T-cell (primary cell): ENCODE measurements at regions of chr5 and their contacts with region 1.

Region 1: DNA sequence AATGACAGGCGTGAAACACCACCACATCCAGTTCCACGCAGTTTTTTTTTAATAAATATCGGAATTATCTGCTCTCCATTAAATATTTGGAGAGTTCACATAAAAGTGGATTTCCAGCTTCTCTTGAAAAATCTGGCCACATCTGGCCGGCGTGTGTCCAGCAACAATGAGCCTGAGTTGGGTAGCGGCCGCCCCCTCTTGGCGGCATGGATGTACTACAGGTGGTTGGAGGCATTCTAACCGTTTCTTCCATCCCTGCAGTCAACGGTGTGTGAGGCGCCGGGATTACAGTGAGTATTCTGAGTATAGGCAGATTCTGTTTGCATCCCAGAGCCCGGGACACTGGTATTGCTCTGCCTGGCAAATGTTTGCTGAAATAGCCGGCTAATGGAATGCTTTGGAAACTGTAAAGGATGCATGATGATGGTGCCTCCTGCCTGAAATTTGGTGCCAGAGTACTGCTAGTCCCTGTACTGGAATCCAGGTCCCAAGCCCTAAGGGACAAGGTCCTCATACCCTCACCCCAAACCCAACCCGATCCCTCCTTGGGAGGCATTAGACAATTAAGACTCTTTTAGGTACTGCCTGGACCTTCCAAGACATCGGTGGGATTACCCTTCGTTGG is 13.6 kb upstream of the GM2A start:
- DNase-seq: peak in 26 of 35 experiments; percentile 13 to 66 (median 42)
- ATAC-seq: peak; percentile 53 to 79 (median 65)
- H3K4me3 ChIP-seq: no peak overlapping the region
- H3K4me3 Mint-ChIP-seq: peak overlapping the region in 1 of 3 donors; percentile 4
- H3K27ac ChIP-seq: no peak overlapping the region
- H3K27ac Mint-ChIP-seq: peak overlapping the region in 1 of 2 donors; percentile 16
- H3K4me1 ChIP-seq: peaks cover 11 to 30% of the 10 kb centered on the region in 2 experiments
- H3K4me1 Mint-ChIP-seq: peaks cover 23 to 35% (median 32%) of the 10 kb centered on the region in 3 donors
- H3K27me3 ChIP-seq: peaks cover 0 to 3% of the 10 kb centered on the region in 2 experiments
- H3K27me3 Mint-ChIP-seq: no peaks in the 10 kb centered on the region

Region 2: GRCh38 chr5:151223469-151224264 is 15.7 kb before region 1 on chr5 and contains the start of gene CCDC69:
- CTCF ChIA-PET with region 1: interaction called, 4 to 10 read pairs
- POLR2A ChIA-PET with region 1: interaction called, 5 read pairs
- DNase-seq: peak in 28 of 35 experiments; percentile 19 to 65 (median 38)
- ATAC-seq: peak; percentile 56 to 65 (median 62)
- H3K4me3 ChIP-seq: peak within 1 kb of the TSS; percentile 87 to 95
- H3K4me3 Mint-ChIP-seq: peak within 1 kb of the TSS; percentile 87 to 94 (median 88)
- H3K27ac ChIP-seq: peak within 1 kb of the TSS; percentile 94
- H3K27ac Mint-ChIP-seq: peak within 1 kb of the TSS; percentile 97 to 99
- H3K4me1 ChIP-seq: peaks cover 41 to 61% of the 10 kb centered on the region in 2 experiments
- H3K4me1 Mint-ChIP-seq: peaks cover 58 to 66% (median 59%) of the 10 kb centered on the region in 3 donors
- H3K27me3 ChIP-seq: no peaks in the 10 kb centered on the region
- H3K27me3 Mint-ChIP-seq: no peaks in the 10 kb centered on the region
- total RNA-seq, gene CCDC69: 86.3 to 112 (median 93.5) TPM

Region 3: DNA sequence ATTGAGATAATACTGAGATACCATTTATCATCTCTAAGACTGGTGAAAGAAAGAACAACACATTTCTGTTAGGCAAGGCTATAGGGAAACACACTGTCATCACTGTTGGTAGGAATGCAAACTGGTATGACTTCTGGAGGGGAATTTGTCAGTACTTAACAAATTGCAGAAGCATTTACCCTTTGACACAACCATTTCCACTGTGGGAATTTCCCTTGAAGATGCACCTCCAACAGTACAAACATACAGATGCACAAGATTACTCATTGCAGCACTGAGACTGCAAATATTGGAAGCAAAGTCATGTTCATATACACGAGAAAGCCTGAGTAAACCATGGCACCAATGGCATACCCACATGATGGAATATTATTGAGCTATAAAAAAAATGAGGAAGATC is 31.2 kb after region 1 on chr5:
- CTCF ChIA-PET with region 1: no interaction called
- POLR2A ChIA-PET with region 1: no interaction called
- DNase-seq: no peak
- ATAC-seq: no peak
- H3K4me3 ChIP-seq: no peak overlapping the region
- H3K4me3 Mint-ChIP-seq: no peak overlapping the region
- H3K27ac ChIP-seq: no peak overlapping the region
- H3K27ac Mint-ChIP-seq: no peak overlapping the region
- H3K4me1 ChIP-seq: no peaks in the 10 kb centered on the region
- H3K4me1 Mint-ChIP-seq: no peaks in the 10 kb centered on the region
- H3K27me3 ChIP-seq: no peaks in the 10 kb centered on the region
- H3K27me3 Mint-ChIP-seq: no peaks in the 10 kb centered on the region